Head of caudate nucleus (tissue), 42 donors: ENCODE measurements at regions of chr1 and their contacts with region 1.

Region 1: GRCh38 chr1:27858072-27858958 is 14.0 kb upstream of the THEMIS2 start:
- DNase-seq: peak; percentile 66 to 96 (median 91)

Region 2: DNA sequence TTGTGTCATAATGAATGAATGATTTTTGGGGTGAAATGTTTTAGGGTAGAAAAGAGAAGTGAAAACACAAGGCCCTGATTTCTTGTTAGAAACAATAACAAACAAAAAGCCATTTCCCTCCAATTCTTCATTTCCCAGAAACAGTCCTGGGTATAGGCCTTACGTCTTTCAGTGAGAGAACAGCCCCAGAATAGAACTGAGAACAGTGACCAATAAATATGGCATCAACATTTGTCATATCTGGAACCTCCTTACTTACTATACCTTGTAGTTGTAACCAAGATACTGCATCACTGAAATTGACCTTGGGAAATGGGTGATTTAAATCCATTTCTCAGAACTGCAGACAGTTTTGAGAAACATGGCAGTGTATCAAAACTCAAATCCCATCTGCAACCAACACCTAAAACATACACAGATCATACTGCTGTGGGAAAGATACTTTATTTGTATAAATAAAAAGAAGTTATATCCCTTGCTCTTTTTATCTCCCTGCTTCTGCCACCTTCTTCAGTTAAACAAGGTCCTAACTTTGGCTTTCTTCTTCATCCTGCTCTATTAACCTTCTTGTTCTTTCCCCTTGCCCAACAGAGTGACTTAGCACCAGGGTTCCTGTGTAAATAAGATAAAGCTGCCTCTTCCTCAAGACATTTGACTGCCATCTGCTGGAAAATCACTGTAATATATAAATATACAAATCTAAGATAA is 121.0 kb after region 1 on chr1:
- intact Hi-C with region 1: loop called (anchors 5 kb)
- DNase-seq: peak in 1 of 42 donors; percentile 46

Region 3: GRCh38 chr1:28088168-28088961 is 230.1 kb after region 1 on chr1 and contains the start of gene EYA3:
- intact Hi-C with region 1: loop called (anchors 5 kb)
- DNase-seq: peak; percentile 95 to 99 (median 98)

Region 4: GRCh38 chr1:28208818-28209441 is 350.6 kb after region 1 on chr1:
- intact Hi-C with region 1: loop called (anchors 10 kb)
- DNase-seq: peak; percentile 30 to 88 (median 74)

Region 5: GRCh38 chr1:29332204-29332603 is 1473.9 kb after region 1 on chr1:
- intact Hi-C with region 1: no loop called
- DNase-seq: no peak